Activated CD8-positive, alpha-beta T cell treated with anti-CD3 and anti-CD28 coated beads for 36 hours (primary cell): ENCODE measurements at regions of chr16 and their contacts with region 1.

Region 1: DNA sequence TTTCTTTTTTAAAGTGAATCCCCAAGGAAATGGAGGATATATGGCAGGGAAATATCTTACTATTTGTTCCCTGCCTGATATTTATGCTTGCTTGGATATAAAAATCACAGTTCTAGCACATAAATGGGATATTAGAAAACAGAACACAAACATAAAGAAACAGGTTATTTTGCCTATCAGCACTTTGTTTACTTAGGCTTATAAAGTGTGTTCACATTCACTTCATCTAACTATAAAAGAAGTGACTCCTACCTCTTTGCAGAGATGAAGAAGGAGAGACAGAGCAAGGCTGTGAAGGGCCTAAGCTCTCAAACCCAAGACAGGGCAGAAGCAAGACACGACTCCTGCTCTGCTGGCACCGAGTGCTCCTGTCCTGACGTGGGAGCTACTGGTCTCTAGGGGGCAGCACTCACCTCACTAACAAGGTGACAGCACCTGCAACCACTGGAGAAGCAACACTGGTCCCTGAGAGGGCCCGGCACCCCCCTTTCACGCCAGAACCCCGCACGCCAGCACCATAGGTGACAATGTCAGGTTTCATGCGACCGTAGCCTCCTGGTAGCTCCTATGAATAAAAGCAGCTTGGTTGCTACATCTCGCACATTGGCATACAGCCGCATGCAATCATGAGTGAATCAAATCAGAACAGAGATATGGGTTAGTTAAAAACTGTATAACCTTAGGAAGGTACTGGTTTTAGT is 32.0 kb downstream of the MBTPS1 start:
- DNase-seq: peak; percentile 87
- ATAC-seq: peak; percentile 87
- H3K4me3 Mint-ChIP-seq: no peak overlapping the region
- H3K27ac Mint-ChIP-seq: no peak overlapping the region
- H3K4me1 Mint-ChIP-seq: peaks cover 43% of the 10 kb centered on the region
- H3K27me3 Mint-ChIP-seq: no peaks in the 10 kb centered on the region
- CTCF ChIP-seq: peak; percentile 89

Region 2: GRCh38 chr16:84096115-84097012 is 11.6 kb after region 1 on chr16:
- CTCF ChIA-PET with region 1: interaction called, 25 read pairs
- POLR2A ChIA-PET with region 1: interaction called, 5 read pairs
- intact Hi-C with region 1: no loop called
- DNase-seq: no peak
- ATAC-seq: no peak
- H3K4me3 Mint-ChIP-seq: no peak overlapping the region
- H3K27ac Mint-ChIP-seq: no peak overlapping the region
- H3K4me1 Mint-ChIP-seq: peaks cover 14% of the 10 kb centered on the region
- H3K27me3 Mint-ChIP-seq: no peaks in the 10 kb centered on the region
- CTCF ChIP-seq: no peak

Region 3: DNA sequence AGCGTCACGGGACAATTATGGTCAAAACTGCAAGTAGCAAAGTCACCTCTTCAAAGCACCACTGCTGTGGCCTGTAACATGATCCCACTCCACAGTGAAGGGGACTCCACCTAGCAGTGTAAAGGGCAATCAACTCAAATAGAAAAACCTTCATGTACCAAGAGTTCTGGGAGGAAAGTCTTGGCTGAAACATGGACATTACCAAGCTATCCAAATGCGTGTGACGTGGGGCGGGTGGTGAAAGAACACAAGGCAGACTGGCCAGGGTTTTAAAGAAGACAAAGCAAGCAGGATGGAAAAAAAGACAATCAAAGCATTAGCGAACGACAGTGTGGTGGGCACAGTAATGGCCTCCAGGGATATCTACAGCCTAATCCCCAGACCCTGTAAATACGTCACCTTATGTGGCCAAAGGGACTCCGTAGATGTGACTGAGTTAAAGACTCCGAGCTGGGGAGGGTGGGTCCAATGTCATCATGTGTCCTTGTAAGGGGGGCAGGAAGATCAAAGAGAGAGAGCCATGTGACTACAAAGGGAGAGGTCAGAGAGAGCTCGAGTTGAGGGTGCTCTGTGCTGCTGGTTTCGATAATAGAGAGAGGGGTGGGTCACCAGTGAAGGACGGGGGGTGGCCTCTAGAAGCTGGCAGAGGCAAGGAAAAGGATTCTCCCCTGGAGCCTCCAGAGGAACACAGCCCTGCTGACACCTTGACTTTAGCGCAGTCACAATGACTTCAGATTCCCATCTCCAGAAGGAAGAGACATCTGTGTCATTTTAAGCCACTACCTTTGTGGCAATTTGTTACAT is 54.3 kb after region 1 on chr16:
- CTCF ChIA-PET with region 1: interaction called, 34 read pairs
- POLR2A ChIA-PET with region 1: interaction called, 3 read pairs
- intact Hi-C with region 1: loop called (anchors 5 kb)
- DNase-seq: peak; percentile 78
- ATAC-seq: peak; percentile 96
- H3K4me3 Mint-ChIP-seq: peak overlapping the region; percentile 4
- H3K27ac Mint-ChIP-seq: peak overlapping the region; percentile 82
- H3K4me1 Mint-ChIP-seq: peaks cover 56% of the 10 kb centered on the region
- H3K27me3 Mint-ChIP-seq: no peaks in the 10 kb centered on the region
- CTCF ChIP-seq: no peak

Region 4: DNA sequence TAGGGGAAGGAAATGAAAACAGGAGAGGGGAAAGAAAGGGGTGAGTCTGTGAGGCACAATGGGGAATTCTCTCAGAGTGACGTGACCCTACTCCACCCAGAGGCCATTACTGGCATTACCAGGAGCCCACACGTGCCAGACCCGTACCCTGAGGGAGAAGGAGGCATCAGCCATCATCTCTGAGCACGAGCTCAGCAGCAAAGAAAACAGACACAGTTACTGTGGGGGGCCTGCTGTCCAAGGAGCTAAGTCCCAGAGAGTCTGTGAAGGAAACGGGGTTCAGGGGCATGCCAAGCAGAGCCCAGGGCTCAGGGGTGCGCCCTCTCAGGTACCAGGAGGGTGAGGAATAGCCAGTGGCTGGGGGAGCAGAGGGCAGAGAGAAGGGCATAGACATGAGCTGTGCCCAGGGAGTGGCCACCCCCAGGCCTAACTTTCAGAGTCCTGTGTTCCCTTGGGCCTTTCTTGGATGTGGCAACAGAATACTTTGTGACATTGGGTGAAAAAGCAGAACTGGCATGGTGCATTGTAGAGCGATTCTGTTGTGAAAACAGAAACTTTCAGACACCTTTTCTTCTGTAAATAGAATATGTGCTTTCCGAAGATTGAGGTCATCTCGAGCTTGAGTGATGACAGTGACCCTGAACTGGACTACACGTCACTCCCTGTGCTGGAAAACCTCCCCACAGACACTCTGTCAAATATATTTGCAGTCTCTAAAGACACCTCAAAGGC is 90.8 kb after region 1 on chr16:
- CTCF ChIA-PET with region 1: interaction called, 172 read pairs
- POLR2A ChIA-PET with region 1: interaction called, 4 read pairs
- intact Hi-C with region 1: no loop called
- DNase-seq: peak; percentile 83
- ATAC-seq: peak; percentile 97
- H3K4me3 Mint-ChIP-seq: no peak overlapping the region
- H3K27ac Mint-ChIP-seq: no peak overlapping the region
- H3K4me1 Mint-ChIP-seq: peaks cover 16% of the 10 kb centered on the region
- H3K27me3 Mint-ChIP-seq: no peaks in the 10 kb centered on the region
- CTCF ChIP-seq: peak; percentile 92